IMR-90 (cell line): ENCODE measurements at regions of chr10 and their contacts with region 1.

Region 1: GRCh38 chr10:7410862-7411670 is at the start of gene SFMBT2:
- DNase-seq: peak; percentile 49
- ATAC-seq: peak; percentile 81
- H3K4me3 ChIP-seq: peak within 1 kb of the TSS; percentile 56
- H3K27ac ChIP-seq: no peak within 1 kb of the TSS; the same call in 1 of the 2 replicates
- H3K4me1 ChIP-seq: no peaks in the 10 kb centered on the region
- H3K27me3 ChIP-seq: peaks cover 35% of the 10 kb centered on the region
- CTCF ChIP-seq: 0 out of 2 replicates have a peak, but pooled peaks have one; percentile 2
- POLR2A ChIP-seq: no peak
- RAD21 ChIP-seq: no peak
- total RNA-seq, gene SFMBT2: 1.1 and 1.3 TPM in 2 replicates

Region 2: GRCh38 chr10:6416892-6417512 is 994.1 kb before region 1 on chr10:
- CTCF ChIA-PET with region 1: no interaction called
- POLR2A ChIA-PET with region 1: no interaction called
- dilution Hi-C with region 1: no loop called
- in situ Hi-C with region 1: loop called (anchors 10 kb)
- intact Hi-C with region 1: loop called (anchors 5 kb)
- DNase-seq: peak; percentile 57
- ATAC-seq: peak; percentile 89
- H3K4me3 ChIP-seq: no peak overlapping the region
- H3K27ac ChIP-seq: no peak overlapping the region
- H3K4me1 ChIP-seq: no peaks in the 10 kb centered on the region
- H3K27me3 ChIP-seq: peaks cover 15% of the 10 kb centered on the region
- CTCF ChIP-seq: peak; percentile 78
- POLR2A ChIP-seq: no peak
- RAD21 ChIP-seq: peak; percentile 78

Region 3: GRCh38 chr10:6678211-6678803 is 732.8 kb before region 1 on chr10:
- CTCF ChIA-PET with region 1: no interaction called
- POLR2A ChIA-PET with region 1: no interaction called
- dilution Hi-C with region 1: loop called (anchors 25 kb)
- in situ Hi-C with region 1: loop called (anchors 5 kb)
- intact Hi-C with region 1: no loop called
- DNase-seq: peak; percentile 29
- ATAC-seq: peak; percentile 63; the same call in 1 of the 2 replicates
- H3K4me3 ChIP-seq: no peak overlapping the region
- H3K27ac ChIP-seq: no peak overlapping the region
- H3K4me1 ChIP-seq: no peaks in the 10 kb centered on the region
- H3K27me3 ChIP-seq: no peaks in the 10 kb centered on the region
- CTCF ChIP-seq: peak; percentile 57
- POLR2A ChIP-seq: no peak
- RAD21 ChIP-seq: peak; percentile 56

Region 4: GRCh38 chr10:6786579-6787031 is 624.5 kb before region 1 on chr10:
- CTCF ChIA-PET with region 1: no interaction called
- POLR2A ChIA-PET with region 1: no interaction called
- dilution Hi-C with region 1: no loop called
- in situ Hi-C with region 1: loop called (anchors 10 kb)
- intact Hi-C with region 1: loop called (anchors 1 kb)
- DNase-seq: peak; percentile 79
- ATAC-seq: peak; percentile 92
- H3K4me3 ChIP-seq: peak overlapping the region; percentile 9; the same call in 1 of the 2 replicates
- H3K27ac ChIP-seq: peak overlapping the region; percentile 63
- H3K4me1 ChIP-seq: peaks cover 7% of the 10 kb centered on the region
- H3K27me3 ChIP-seq: no peaks in the 10 kb centered on the region
- CTCF ChIP-seq: peak; percentile 63
- POLR2A ChIP-seq: no peak
- RAD21 ChIP-seq: peak; percentile 61

Region 5: GRCh38 chr10:7260412-7260900 is 150.6 kb before region 1 on chr10:
- CTCF ChIA-PET with region 1: no interaction called
- POLR2A ChIA-PET with region 1: no interaction called
- dilution Hi-C with region 1: no loop called
- in situ Hi-C with region 1: loop called (anchors 10 kb)
- intact Hi-C with region 1: loop called (anchors 1 kb)
- DNase-seq: peak; percentile 86
- ATAC-seq: peak; percentile 82
- H3K4me3 ChIP-seq: no peak overlapping the region
- H3K27ac ChIP-seq: peak overlapping the region; percentile 46; the same call in 1 of the 2 replicates
- H3K4me1 ChIP-seq: peaks cover 6% of the 10 kb centered on the region; the same call in 1 of the 2 replicates
- H3K27me3 ChIP-seq: no peaks in the 10 kb centered on the region
- CTCF ChIP-seq: peak; percentile 43
- POLR2A ChIP-seq: no peak
- RAD21 ChIP-seq: peak; percentile 25

Region 6: GRCh38 chr10:7320072-7320471 is 91.0 kb before region 1 on chr10:
- CTCF ChIA-PET with region 1: no interaction called
- POLR2A ChIA-PET with region 1: interaction called, 11 read pairs
- dilution Hi-C with region 1: no loop called
- in situ Hi-C with region 1: no loop called
- intact Hi-C with region 1: no loop called
- DNase-seq: no peak
- ATAC-seq: no peak
- H3K4me3 ChIP-seq: no peak overlapping the region
- H3K27ac ChIP-seq: no peak overlapping the region
- H3K4me1 ChIP-seq: no peaks in the 10 kb centered on the region
- H3K27me3 ChIP-seq: no peaks in the 10 kb centered on the region
- CTCF ChIP-seq: no peak
- POLR2A ChIP-seq: no peak
- RAD21 ChIP-seq: no peak

Region 7: DNA sequence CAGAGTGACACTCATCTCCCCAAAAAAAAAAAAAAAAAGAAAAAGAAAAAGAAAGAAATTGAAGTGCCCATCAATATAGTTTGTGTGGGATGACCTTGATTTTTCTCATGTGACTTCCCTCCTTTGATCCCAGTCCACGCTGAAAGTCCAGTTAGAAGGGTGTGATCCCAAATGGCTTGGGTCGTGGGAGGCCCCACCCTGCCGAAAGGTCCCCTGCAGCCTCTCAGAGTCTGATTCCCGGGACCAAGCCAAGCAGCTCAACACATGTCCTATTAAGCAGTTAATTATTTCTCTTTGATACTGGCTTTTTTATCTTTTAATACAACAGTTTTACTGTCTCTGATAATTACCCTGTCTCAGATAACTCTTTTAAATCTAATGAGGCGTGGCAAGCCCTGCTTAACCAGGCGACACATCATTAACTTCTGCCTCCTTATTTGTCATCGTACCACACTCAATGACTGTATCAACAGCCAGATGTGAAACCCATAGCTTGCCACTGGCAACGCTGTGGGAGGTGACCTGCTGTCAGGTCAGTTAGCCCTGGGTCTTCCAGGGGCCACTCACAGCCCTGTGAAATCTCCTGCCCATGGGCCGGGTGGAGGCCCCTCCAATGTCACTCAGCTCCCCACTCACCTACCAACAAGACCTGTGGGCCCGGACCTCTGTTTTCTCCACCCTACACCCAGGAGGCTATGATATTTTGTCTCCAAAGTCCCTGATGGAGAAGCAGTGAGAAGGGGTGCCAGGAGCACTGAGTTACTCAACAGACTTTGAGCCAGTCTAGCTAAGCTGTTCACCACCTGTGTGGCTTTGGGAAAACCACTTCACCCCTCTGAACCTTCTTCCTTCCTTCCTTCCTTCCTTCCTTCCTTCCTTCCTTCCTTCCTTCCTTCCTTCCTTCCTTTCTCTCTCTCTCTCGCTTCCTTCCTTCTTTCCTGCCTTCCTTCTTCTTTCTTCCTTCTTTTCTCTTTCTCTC is 109.7 kb after region 1 on chr10:
- CTCF ChIA-PET with region 1: no interaction called
- POLR2A ChIA-PET with region 1: no interaction called
- dilution Hi-C with region 1: no loop called
- in situ Hi-C with region 1: no loop called
- intact Hi-C with region 1: no loop called
- DNase-seq: no peak
- ATAC-seq: no peak
- H3K4me3 ChIP-seq: no peak overlapping the region
- H3K27ac ChIP-seq: no peak overlapping the region
- H3K4me1 ChIP-seq: no peaks in the 10 kb centered on the region
- H3K27me3 ChIP-seq: peaks cover 1% of the 10 kb centered on the region; the same call in 1 of the 2 replicates
- CTCF ChIP-seq: no peak
- POLR2A ChIP-seq: no peak
- RAD21 ChIP-seq: no peak